MCF 10A (cell line): ENCODE measurements at regions of chr21 and their contacts with region 1.

Region 1: DNA sequence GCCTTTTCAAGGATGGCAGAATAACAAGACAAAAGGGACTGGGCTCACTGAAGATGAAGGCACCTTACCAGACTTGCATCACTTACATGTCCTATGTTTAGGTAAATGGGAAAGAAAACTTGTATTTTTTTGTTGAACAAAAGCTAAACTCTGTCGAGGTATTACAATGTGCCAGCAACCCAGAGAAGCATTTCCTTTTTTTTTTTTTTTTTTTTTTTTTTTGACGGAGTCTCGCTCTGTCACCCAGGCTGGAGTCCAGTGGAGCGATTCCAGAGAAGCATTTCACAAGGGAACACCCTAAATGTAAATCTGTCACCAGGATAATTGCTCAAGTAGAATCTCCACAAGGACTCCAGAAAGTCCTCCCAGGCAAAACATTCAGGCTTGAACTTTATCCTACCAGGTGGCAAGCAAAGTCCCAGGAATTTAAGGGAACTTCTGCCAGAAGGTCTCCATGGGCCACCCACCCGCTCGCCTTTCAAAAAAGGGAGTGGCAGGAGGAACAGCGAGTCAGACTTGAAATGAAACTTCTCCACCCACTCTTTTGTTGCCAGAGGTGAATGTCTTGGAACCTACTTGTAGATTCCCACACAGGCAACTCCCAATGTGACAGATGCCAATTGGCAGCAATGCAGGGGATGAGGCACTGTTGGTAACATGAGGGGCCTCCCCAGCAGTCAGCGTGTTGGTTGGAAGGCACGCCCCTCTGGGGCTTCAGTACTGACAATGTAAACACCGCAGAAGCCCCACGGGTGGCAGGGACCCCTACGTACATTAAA is 125.0 kb downstream of the TIAM1 start:
- DNase-seq: peak; percentile 94
- H3K4me3 Mint-ChIP-seq: peak overlapping the region; percentile 51
- H3K27ac Mint-ChIP-seq: peak overlapping the region; percentile 74
- H3K4me1 Mint-ChIP-seq: peaks cover 22% of the 10 kb centered on the region
- H3K27me3 Mint-ChIP-seq: no peaks in the 10 kb centered on the region
- CTCF ChIP-seq: no peak

Region 2: DNA sequence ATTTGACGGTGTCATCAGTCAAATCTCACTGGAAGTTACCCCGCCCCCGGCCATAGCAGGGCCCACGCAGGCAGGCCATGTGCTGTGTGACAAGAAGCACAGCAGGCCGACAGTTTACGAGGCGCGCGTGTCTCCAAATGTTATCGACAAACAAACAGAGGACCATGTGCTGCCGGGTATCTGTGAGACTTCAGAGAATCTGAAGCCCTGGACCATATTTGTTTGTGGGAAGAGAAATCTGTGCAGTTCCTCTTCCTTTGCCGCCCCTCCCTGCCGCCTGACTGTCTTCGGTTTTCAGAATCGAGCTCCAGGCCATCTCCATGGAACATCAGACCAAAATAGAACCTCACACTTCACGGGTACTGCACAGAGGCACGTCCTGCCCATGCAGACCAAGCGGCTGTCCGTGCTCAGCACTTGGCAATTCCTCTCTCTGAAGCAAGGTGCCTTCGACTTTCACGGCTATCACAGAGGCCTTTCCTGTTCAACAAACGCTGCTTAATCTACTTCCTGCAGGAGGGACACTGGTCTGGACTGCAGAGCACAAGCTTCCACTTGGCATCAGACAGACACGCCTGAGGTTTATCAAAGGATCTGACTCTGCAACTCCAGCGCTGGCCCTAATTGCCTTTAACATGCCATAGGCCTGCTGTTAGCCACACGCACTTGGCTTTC is 45.0 kb before region 1 on chr21:
- CTCF ChIA-PET with region 1: no interaction called
- POLR2A ChIA-PET with region 1: no interaction called
- intact Hi-C with region 1: no loop called
- DNase-seq: no peak
- H3K4me3 Mint-ChIP-seq: no peak overlapping the region
- H3K27ac Mint-ChIP-seq: no peak overlapping the region
- H3K4me1 Mint-ChIP-seq: no peaks in the 10 kb centered on the region
- H3K27me3 Mint-ChIP-seq: no peaks in the 10 kb centered on the region
- CTCF ChIP-seq: no peak

Region 3: GRCh38 chr21:31273278-31273677 is 54.3 kb after region 1 on chr21:
- CTCF ChIA-PET with region 1: no interaction called
- POLR2A ChIA-PET with region 1: no interaction called
- intact Hi-C with region 1: loop called (anchors 5 kb)
- DNase-seq: no peak
- H3K4me3 Mint-ChIP-seq: no peak overlapping the region
- H3K27ac Mint-ChIP-seq: no peak overlapping the region
- H3K4me1 Mint-ChIP-seq: peaks cover 8% of the 10 kb centered on the region
- H3K27me3 Mint-ChIP-seq: no peaks in the 10 kb centered on the region
- CTCF ChIP-seq: no peak

Region 4: GRCh38 chr21:31310750-31311149 is 91.7 kb after region 1 on chr21:
- CTCF ChIA-PET with region 1: interaction called, 3 read pairs
- POLR2A ChIA-PET with region 1: interaction called, 11 read pairs
- intact Hi-C with region 1: no loop called
- DNase-seq: peak; percentile 87
- H3K4me3 Mint-ChIP-seq: no peak overlapping the region
- H3K27ac Mint-ChIP-seq: peak overlapping the region; percentile 77
- H3K4me1 Mint-ChIP-seq: peaks cover 12% of the 10 kb centered on the region
- H3K27me3 Mint-ChIP-seq: no peaks in the 10 kb centered on the region
- CTCF ChIP-seq: no peak